ENCODE measurements at regions of chr16 and their contacts with region 1.

Region 1: GRCh38 chr16:69150146-69150865 is 17.9 kb downstream of the UTP4 start:
- DNase-seq: peak; percentile 82
- H3K4me3 Mint-ChIP-seq: no peak overlapping the region
- H3K27ac Mint-ChIP-seq: no peak overlapping the region
- H3K4me1 Mint-ChIP-seq: no peaks in the 10 kb centered on the region
- H3K27me3 Mint-ChIP-seq: no peaks in the 10 kb centered on the region
- CTCF ChIP-seq: peak; percentile 77

Region 2: GRCh38 chr16:68310761-68311511 is 839.4 kb before region 1 on chr16 and contains the starts of genes PRMT7 and SLC7A6OS:
- CTCF ChIA-PET with region 1: no interaction called
- POLR2A ChIA-PET with region 1: no interaction called
- intact Hi-C with region 1: no loop called
- DNase-seq: peak; percentile 90
- H3K4me3 Mint-ChIP-seq: peak within 1 kb of the TSS; percentile 97
- H3K27ac Mint-ChIP-seq: peak within 1 kb of the TSS; percentile 87
- H3K4me1 Mint-ChIP-seq: peaks cover 16% of the 10 kb centered on the region
- H3K27me3 Mint-ChIP-seq: no peaks in the 10 kb centered on the region
- CTCF ChIP-seq: no peak
- total RNA-seq, gene PRMT7: 28.0 and 33.2 TPM in 2 replicates
- total RNA-seq, gene SLC7A6OS: 19.4 and 20.4 TPM in 2 replicates

Region 3: DNA sequence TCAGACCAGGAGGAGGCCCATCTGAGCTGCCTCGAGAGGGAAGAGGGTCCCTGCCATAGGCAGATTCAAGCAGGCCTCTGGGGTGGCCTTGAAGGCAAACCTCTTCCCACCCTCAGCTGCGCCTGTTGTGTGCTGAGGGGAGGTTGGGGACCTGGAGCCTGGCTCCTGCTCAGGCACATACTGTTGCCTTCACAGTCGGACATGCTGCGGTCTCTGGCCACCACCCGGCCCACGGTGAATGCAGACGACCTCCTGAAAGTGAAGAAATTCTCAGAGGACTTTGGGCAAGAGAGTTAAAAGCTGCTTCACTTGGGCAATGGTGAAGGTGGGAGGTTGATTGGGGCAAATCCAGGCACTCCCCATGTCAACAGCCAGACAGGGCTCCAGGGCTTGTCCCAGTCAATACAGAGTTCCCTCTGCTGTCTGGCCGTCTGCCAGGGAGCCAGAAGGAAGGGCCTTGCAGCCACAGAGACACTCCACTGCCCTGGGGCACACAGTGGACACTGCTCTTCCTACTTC is 173.8 kb after region 1 on chr16:
- CTCF ChIA-PET with region 1: interaction called, 12 read pairs
- POLR2A ChIA-PET with region 1: no interaction called
- intact Hi-C with region 1: no loop called
- DNase-seq: no peak
- H3K4me3 Mint-ChIP-seq: no peak overlapping the region
- H3K27ac Mint-ChIP-seq: peak overlapping the region; percentile 23
- H3K4me1 Mint-ChIP-seq: peaks cover 20% of the 10 kb centered on the region
- H3K27me3 Mint-ChIP-seq: no peaks in the 10 kb centered on the region
- CTCF ChIP-seq: no peak